Activated T-helper 1 cell treated with anti-CD3 and anti-CD28 coated beads, Interleukin-12 subunit alpha, Interleukin-12 subunit beta, Interleukin-2, Interleukin-4 antibody, amounts not matched to agents 30 ng/mL and 10 ng/mL and 1 ng/mL, durations not matched to agents 14 hours and 24 hours and 36 hours (primary cell): ENCODE measurements at regions of chr12 and their contacts with region 1.

Region 1: GRCh38 chr12:105107494-105108371 is at the start of gene WASHC4:
- DNase-seq: peak; percentile 96
- H3K4me3 Mint-ChIP-seq: peak within 1 kb of the TSS; percentile 95
- H3K27ac Mint-ChIP-seq: peak within 1 kb of the TSS; percentile 94
- H3K4me1 Mint-ChIP-seq: peaks cover 44% of the 10 kb centered on the region
- H3K27me3 Mint-ChIP-seq: peaks cover 24% of the 10 kb centered on the region
- total RNA-seq, gene WASHC4: 34.5 and 36.3 TPM in 2 replicates

Region 2: GRCh38 chr12:103840876-103841689 is 1266.7 kb before region 1 on chr12 and contains the start of gene NT5DC3:
- intact Hi-C with region 1: loop called (anchors 2 kb)
- DNase-seq: peak; percentile 75
- H3K4me3 Mint-ChIP-seq: peak within 1 kb of the TSS; percentile 90
- H3K27ac Mint-ChIP-seq: peak within 1 kb of the TSS; percentile 83
- H3K4me1 Mint-ChIP-seq: peaks cover 24% of the 10 kb centered on the region
- H3K27me3 Mint-ChIP-seq: peaks cover 24% of the 10 kb centered on the region
- total RNA-seq, gene NT5DC3: 13.2 and 14.2 TPM in 2 replicates

Region 3: DNA sequence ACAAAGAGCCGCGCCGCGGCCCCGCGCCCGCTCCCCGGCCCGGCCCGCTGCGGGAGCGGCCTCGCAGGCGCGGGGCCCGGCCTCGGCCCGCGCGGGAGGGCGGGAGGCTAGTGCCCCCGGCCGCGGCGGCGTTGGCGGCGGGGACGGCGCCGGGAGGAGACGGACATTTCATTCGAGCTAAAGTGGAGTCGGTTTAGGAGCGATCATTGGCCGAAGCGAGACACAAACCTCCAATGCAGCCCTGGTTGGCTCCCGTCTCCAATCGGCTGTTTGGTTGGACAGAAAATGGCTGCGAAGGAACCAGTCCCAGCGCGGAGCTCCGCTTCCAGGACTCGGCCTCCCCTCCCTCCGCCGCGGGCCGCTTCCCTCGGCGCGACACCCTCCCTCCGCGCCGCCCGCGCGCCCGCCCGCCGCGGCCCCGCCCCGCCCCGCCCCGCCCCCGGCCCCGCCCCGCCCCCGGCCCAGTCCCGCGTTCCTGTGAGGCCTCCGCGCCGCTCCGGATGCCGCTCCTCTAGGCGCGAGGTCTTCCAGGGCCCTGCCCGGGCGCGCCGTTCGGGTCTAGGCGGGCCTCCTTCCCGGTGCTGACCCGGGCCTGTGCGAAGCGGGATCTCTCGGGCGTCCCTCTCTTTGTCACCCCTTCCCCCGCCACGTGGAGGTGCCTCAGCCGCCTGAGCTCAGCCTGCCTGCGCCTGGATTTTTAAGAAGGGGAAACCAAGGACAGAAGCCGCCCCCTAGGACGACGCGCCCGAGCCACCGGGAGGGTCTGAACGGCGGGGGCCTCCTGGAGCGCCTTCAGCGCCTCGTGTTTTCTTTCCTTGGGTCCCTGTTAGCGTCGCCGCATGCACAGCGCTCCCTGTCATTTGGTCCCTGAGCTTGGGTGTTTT is 969.6 kb before region 1 on chr12 and contains the start of gene NFYB:
- intact Hi-C with region 1: loop called (anchors 1 kb)
- DNase-seq: peak; percentile 91
- H3K4me3 Mint-ChIP-seq: peak within 1 kb of the TSS; percentile 87
- H3K27ac Mint-ChIP-seq: peak within 1 kb of the TSS; percentile 88
- H3K4me1 Mint-ChIP-seq: peaks cover 16% of the 10 kb centered on the region
- H3K27me3 Mint-ChIP-seq: peaks cover 7% of the 10 kb centered on the region
- total RNA-seq, gene NFYB: 25.0 and 25.2 TPM in 2 replicates

Region 4: DNA sequence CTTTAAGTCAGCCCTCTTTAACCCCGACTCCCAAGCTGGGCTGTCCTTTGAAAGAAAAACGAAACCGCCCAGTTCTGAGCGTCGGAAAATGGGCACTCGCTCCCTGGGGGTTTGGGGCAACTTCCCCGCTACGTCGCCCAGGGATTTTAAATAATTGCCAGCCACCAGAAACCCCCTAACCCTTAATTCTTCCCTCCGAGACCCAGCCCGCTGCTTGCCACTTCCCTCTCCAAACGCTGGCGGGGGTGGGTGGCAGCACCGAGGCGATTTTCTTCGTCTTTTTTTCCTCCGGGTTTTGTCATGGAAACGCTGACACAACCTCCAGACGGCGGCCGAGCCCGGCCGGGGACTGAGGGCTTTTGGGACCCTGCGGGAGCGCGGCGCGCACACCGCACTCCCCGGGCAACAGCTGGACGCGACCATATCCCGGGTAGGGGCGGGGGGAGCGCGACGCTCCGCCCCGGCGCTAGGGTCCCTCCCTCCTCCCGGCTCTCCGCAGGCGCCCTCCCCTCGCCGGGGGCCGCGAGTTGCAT is 651.2 kb before region 1 on chr12 and contains the start of gene CHST11:
- intact Hi-C with region 1: loop called (anchors 2 kb)
- DNase-seq: peak; percentile 77
- H3K4me3 Mint-ChIP-seq: peak within 1 kb of the TSS; percentile 99
- H3K27ac Mint-ChIP-seq: peak within 1 kb of the TSS; percentile 99
- H3K4me1 Mint-ChIP-seq: peaks cover 43% of the 10 kb centered on the region
- H3K27me3 Mint-ChIP-seq: no peaks in the 10 kb centered on the region
- total RNA-seq, gene CHST11: 69.8 and 70.7 TPM in 2 replicates

Region 5: GRCh38 chr12:104986022-104986941 is 121.5 kb before region 1 on chr12 and contains the start of gene NOPCHAP1:
- intact Hi-C with region 1: loop called (anchors 1 kb)
- DNase-seq: peak; percentile 83
- H3K4me3 Mint-ChIP-seq: peak within 1 kb of the TSS; percentile 89
- H3K27ac Mint-ChIP-seq: peak within 1 kb of the TSS; percentile 57
- H3K4me1 Mint-ChIP-seq: peaks cover 44% of the 10 kb centered on the region
- H3K27me3 Mint-ChIP-seq: peaks cover 3% of the 10 kb centered on the region
- total RNA-seq, gene NOPCHAP1: 28.0 and 40.0 TPM in 2 replicates

Region 6: DNA sequence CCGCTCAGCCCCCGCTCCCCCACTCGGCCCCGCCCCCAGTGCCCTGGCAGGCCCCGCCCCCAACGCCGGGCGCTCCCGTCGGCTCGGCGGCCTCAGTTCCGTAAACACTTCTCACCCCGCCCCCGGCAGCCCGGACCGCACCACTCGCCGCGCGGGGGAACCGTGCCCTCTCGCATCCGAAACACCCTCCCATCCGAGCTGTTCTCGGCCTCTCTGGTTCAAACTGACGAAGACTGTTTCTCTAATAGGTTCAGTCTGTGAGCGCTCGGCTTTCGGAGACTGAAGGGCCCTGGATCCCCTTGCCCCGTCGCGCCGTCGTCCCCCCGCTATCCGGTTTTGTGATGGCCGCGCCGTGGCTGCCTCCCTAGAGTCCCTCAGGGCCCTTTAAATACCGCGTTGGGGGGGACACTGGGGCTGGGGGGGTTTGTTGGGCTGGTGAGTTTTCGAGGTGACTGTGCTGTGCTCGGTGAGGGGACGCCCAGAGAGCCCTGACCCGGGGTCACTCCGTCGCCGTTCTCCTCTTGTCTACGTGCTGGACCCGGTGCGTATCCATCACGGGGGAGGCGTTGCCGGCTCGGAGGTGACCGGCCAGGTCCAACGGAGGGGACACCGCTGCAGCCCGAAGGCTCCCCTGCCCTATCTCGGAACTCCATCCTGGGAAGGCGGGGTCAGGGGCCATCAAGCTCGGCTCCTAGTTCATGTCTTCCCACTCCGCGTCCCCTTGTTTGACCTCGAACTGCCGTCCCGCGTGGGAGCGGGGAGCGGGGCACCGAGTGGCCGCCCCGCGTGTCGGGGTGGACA is 1194.9 kb after region 1 on chr12 and contains the start of gene TCP11L2:
- intact Hi-C with region 1: loop called (anchors 5 kb)
- DNase-seq: peak; percentile 83
- H3K4me3 Mint-ChIP-seq: peak within 1 kb of the TSS; percentile 93
- H3K27ac Mint-ChIP-seq: peak within 1 kb of the TSS; percentile 100
- H3K4me1 Mint-ChIP-seq: peaks cover 49% of the 10 kb centered on the region
- H3K27me3 Mint-ChIP-seq: no peaks in the 10 kb centered on the region
- total RNA-seq, gene TCP11L2: 4.0 and 4.3 TPM in 2 replicates